ENCODE measurements at regions of chr4 and their contacts with region 1.

Region 1: DNA sequence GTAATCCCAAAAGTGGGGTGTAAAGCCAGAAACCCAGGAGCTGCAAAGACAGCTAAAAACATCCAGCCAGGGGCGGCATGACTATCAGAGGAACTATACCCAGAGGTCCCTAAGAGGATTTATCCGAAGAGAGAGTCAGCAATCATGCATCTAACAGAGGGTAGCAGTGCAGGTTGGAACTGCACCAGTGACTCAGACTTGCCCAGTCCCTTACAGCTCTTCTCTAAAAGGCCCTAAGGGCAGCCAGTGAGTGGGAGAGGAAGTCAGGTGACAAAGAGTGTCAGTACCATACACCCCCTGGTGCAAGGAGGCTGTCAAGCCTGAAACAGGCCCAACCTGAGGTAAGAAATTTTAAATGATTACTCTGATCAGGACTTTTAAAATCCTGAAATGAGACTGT is 88.1 kb downstream of the CAMK2D start:
- DNase-seq: peak in 1 of 2 experiments; percentile 3
- H3K4me3 ChIP-seq: no peak overlapping the region
- H3K27ac ChIP-seq: no peak overlapping the region
- H3K4me1 ChIP-seq: no peaks in the 10 kb centered on the region
- H3K27me3 ChIP-seq: no peaks in the 10 kb centered on the region
- CTCF ChIP-seq: no peak
- EP300 ChIP-seq: no peak
- POLR2A ChIP-seq: no peak
- RAD21 ChIP-seq: 0 out of 4 replicates have a peak, but pooled peaks of 1 of the 2 experiments have one; percentile 21

Region 2: DNA sequence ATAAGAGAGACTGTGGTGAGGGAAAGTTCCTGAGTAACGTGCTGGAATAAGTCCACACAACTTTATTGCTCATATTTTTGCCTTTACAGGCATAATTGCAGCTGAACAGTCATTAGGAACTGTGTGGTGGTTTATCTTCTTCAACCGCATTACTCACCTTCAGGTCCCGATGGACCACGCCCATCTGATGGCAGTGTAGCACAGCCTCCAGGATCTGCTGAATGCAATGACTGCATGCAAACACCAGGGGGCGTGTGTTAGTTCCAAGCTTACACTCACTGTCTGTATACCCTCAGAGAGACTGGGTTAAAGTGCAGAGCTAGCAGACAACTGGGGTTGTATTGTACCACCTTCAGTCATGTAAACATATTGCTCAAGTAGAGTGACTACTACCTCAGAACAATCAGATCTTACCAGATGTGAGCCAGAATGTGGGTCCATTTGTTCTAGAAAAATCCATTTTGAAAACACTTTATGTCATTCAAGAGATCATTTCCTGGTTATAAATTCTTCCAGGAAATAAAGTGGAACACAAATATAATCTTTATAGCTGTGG is 125.9 kb before region 1 on chr4:
- CTCF ChIA-PET with region 1: interaction called, 11 read pairs
- POLR2A ChIA-PET with region 1: no interaction called
- DNase-seq: peak; percentile 75 to 86
- H3K4me3 ChIP-seq: no peak overlapping the region
- H3K27ac ChIP-seq: no peak overlapping the region
- H3K4me1 ChIP-seq: no peaks in the 10 kb centered on the region
- H3K27me3 ChIP-seq: no peaks in the 10 kb centered on the region
- CTCF ChIP-seq: peak; percentile 87 to 100 (median 98)
- EP300 ChIP-seq: no peak
- POLR2A ChIP-seq: no peak
- RAD21 ChIP-seq: peak; percentile 86 to 95

Region 3: DNA sequence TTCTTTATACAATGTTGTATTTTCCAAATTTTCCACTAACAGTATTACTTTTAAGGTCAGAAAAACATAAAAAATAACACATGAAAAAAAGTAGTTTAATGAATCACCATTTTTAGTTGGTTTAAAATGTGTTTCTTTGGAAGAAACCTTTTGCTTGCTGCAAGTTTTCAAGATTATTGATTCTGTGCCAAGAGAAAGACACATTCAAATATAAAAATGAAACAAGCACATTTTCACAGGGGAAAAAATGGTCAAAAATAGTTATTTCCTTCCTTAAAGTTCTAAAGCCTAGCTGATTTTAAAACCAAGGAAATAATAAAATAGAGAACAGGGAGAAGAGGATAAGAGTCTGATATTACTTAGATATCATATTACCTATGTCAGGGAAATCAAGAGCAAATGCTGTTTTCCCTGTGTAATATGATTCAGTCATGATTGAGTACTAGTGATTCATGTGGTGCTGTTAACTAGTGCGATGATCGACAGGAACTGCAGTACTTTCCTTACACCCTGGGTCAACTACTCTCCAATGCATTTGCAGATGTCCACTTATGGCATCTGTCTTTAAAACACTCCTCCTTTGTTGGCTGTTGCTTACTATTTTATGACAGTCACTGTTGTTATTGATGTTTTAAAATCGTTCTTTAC is 15.7 kb before region 1 on chr4:
- CTCF ChIA-PET with region 1: no interaction called
- POLR2A ChIA-PET with region 1: no interaction called
- DNase-seq: no peak
- H3K4me3 ChIP-seq: no peak overlapping the region
- H3K27ac ChIP-seq: no peak overlapping the region
- H3K4me1 ChIP-seq: peaks cover 0 to 4% (median 0%) of the 10 kb centered on the region in 4 experiments; a peak in 1 of 7 replicates
- H3K27me3 ChIP-seq: no peaks in the 10 kb centered on the region
- CTCF ChIP-seq: no peak
- EP300 ChIP-seq: no peak
- POLR2A ChIP-seq: no peak
- RAD21 ChIP-seq: no peak